Activated CD8-positive, alpha-beta memory T cell treated with anti-CD3 and anti-CD28 coated beads, Interleukin-2, amount 10 ng/mL, durations not matched to agents 7 days and 5 days (primary cell): ENCODE measurements at regions of chr16 and their contacts with region 1.

Region 1: DNA sequence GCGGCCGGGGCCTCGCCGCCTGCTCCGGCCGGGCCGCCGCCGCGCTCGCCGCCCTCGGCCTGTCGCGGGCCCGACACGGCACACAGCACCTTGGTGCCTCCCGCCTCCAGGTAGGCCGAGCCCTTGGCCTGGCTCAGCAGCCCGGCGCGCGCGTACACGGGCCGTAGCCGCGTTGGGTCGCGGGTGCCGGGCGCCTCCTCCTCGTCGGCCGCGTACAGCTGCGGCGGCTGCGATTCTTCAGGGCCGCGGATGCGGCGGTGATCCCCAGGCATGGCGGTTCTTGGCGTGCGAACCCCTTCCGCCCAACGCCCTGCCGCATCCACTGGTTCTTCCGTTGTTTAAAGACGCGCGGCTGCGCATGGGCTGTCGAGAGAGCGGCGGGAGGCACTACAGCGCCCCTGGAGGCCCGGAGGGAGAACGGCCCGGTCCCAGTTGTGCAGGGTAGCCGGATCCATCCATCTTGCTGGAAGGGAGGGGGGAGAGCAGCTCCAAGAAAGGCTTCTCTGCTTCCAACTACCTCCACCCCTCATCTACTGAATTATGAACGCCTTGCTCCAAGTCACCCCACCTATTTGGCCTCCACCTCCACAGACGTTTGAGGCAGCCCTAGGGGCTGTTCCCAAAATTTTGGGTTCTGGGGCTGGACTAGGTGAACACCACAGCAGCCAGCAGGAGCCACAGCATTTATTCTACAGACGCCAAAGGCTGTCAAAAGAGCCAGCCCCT is at the start of gene EXOSC6:
- DNase-seq: peak; percentile 95
- ATAC-seq: peak; percentile 89
- H3K4me3 Mint-ChIP-seq: peak within 1 kb of the TSS; percentile 84
- H3K27ac Mint-ChIP-seq: peak within 1 kb of the TSS; percentile 92
- H3K4me1 Mint-ChIP-seq: peaks cover 30% of the 10 kb centered on the region
- H3K27me3 Mint-ChIP-seq: no peaks in the 10 kb centered on the region
- total RNA-seq, gene EXOSC6: 32.2 to 33.5 TPM

Region 2: DNA sequence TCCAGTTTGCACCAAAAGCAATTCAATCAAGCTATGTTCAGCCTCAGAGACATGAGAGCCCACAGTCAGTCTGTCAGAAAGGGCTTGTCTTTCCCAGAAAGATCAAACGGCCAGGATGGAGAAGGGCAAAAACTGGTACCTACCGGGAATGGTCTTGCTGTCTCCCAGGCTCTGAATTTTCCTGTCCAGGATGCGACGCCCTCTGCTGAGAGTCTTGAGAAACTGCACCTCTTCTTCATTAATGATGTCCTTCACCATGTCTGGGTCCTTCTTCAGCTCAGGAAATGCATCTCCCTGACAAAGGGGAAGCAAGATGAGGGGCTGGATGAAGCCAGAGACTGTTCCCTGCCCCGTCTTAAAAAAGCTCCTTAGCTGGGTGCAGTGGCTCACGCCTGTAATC is 15.7 kb after region 1 on chr16:
- CTCF ChIA-PET with region 1: interaction called, 26 read pairs
- DNase-seq: no peak
- ATAC-seq: peak; percentile 51
- H3K4me3 Mint-ChIP-seq: no peak overlapping the region
- H3K27ac Mint-ChIP-seq: no peak overlapping the region
- H3K4me1 Mint-ChIP-seq: no peaks in the 10 kb centered on the region
- H3K27me3 Mint-ChIP-seq: no peaks in the 10 kb centered on the region

Region 3: GRCh38 chr16:70289229-70290098 is 37.7 kb after region 1 on chr16 and contains the start of gene AARS1:
- CTCF ChIA-PET with region 1: interaction called, 19 read pairs
- DNase-seq: peak; percentile 97
- ATAC-seq: peak; percentile 96
- H3K4me3 Mint-ChIP-seq: peak within 1 kb of the TSS; percentile 100
- H3K27ac Mint-ChIP-seq: peak within 1 kb of the TSS; percentile 100
- H3K4me1 Mint-ChIP-seq: peaks cover 41% of the 10 kb centered on the region
- H3K27me3 Mint-ChIP-seq: peaks cover 3% of the 10 kb centered on the region
- total RNA-seq, gene AARS1: 117 to 147 TPM